Transverse colon (tissue), 4 donors: ENCODE measurements at regions of chr6 and their contacts with region 1.

Region 1: DNA sequence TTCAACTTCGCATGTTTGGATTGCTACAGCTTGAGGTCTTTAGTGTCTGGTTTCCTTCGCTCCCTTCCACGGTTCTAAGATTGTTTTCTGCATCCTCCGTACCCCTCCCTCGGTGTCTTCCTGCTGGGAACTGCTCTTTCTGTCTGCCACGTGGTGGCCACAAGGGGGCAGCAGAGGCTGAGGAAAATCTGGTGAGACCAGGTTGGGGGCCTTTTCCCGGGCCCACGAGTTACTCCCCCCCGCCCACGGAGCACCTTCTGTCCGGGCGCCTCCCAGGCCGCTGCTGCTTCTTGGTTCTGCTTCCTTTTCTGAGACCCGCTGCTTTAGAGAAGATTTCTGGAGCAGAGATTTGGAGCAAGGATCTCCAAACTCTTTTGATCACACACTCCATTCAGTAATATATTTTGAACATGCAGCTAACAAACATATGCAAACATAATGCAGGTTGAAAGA is 21.1 kb upstream of the NOTCH4 start:
- DNase-seq: peak; percentile 81
- H3K4me3 ChIP-seq: peak overlapping the region in 1 of 4 donors; percentile 27
- H3K27ac ChIP-seq: peak overlapping the region; percentile 36 to 61 (median 56)
- H3K4me1 ChIP-seq: peaks cover 0 to 8% (median 5%) of the 10 kb centered on the region in 4 donors
- H3K27me3 ChIP-seq: no peaks in the 10 kb centered on the region
- CTCF ChIP-seq: peak; percentile 87 to 93 (median 91)
- EP300 ChIP-seq: no peak
- POLR2A ChIP-seq: no peak

Region 2: GRCh38 chr6:32413427-32414047 is 168.6 kb after region 1 on chr6:
- in situ Hi-C with region 1: loop called in 3 of 4 experiments (anchors 10 to 25 kb)
- intact Hi-C with region 1: no loop called
- DNase-seq: peak; percentile 84
- H3K4me3 ChIP-seq: no peak overlapping the region
- H3K27ac ChIP-seq: no peak overlapping the region
- H3K4me1 ChIP-seq: peaks cover 0 to 28% (median 13%) of the 10 kb centered on the region in 4 donors
- H3K27me3 ChIP-seq: peaks cover 76% of the 10 kb centered on the region
- CTCF ChIP-seq: peak; percentile 91 to 98 (median 95)
- EP300 ChIP-seq: no peak
- POLR2A ChIP-seq: no peak

Region 3: DNA sequence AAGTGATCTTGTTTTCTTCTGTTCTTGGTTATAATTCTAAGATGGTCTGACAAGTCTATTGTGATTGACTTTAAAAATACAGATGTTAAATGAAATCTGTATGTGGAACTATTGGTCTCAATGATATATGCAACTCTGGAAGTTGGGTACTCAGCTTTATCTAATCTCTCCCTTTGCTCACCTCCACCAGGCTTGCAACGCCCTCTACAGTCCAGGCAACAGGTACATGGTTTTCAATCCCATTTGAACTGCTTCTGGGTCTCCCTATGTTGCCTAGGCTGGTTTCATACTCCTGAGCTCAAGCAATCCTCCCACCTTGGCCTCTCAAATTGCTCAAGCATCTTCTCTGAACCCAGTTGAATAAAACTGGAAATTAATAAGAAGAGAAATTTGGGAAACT is 447.0 kb after region 1 on chr6:
- in situ Hi-C with region 1: loop called in 1 of 4 experiments (anchors 10 kb)
- intact Hi-C with region 1: no loop called
- DNase-seq: peak; percentile 54
- H3K4me3 ChIP-seq: no peak overlapping the region
- H3K27ac ChIP-seq: no peak overlapping the region
- H3K4me1 ChIP-seq: no peaks in the 10 kb centered on the region
- H3K27me3 ChIP-seq: peaks cover 38% of the 10 kb centered on the region
- CTCF ChIP-seq: peak; percentile 25 to 52 (median 49)
- EP300 ChIP-seq: no peak
- POLR2A ChIP-seq: no peak

Region 4: DNA sequence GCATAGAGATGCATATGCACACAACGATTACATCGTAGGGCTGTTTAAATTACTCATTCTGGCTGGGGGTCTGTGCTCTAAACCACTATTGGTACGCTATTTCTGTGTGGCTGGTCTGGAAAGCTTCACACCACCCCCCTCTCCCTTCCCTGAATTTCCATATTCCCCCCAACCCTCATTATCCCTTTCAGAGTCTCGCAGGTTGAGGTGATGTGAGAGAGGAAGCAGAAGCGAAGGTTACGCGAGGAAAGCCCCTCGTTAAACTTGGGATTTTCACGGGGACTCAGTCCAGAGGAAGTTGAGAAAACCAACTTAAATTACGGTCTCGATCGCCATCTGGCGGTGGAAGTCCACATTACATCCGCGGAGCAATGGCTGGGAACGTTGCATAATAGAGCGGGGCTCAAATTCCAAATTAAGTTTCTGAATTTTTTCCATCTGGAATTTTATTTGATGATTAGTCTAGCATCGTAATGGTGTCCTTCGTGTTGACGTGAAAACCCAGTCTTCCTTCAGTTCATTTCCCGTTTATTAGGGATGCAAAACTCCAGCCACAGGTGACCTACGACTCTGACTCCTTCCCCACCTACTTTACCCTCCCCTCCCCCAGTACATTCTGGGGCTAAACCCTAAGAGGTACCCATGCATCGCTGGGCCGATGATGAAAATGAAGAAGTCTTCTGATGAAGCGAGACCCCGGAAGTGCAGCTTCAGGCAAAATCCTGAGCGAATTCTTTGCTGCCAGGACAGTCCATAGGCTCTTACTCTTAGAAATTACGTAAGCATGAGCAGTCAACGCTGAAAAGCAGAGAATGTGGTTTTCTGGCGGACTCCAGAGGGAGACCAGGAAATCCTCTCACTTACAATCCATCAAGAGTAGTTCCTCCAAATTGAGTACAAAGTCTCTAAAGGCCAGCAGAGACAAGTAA is 552.1 kb after region 1 on chr6:
- in situ Hi-C with region 1: loop called in 1 of 4 experiments (anchors 25 kb)
- intact Hi-C with region 1: no loop called
- DNase-seq: peak; percentile 81
- H3K4me3 ChIP-seq: peak overlapping the region in 1 of 4 donors; percentile 19
- H3K27ac ChIP-seq: no peak overlapping the region
- H3K4me1 ChIP-seq: peaks cover 0 to 7% (median 2%) of the 10 kb centered on the region in 4 donors
- H3K27me3 ChIP-seq: peaks cover 82% of the 10 kb centered on the region
- CTCF ChIP-seq: peak; percentile 89 to 93 (median 91)
- EP300 ChIP-seq: no peak
- POLR2A ChIP-seq: no peak